H1 (cell line): ENCODE measurements at regions of chr1 and their contacts with region 1.

Region 1: DNA sequence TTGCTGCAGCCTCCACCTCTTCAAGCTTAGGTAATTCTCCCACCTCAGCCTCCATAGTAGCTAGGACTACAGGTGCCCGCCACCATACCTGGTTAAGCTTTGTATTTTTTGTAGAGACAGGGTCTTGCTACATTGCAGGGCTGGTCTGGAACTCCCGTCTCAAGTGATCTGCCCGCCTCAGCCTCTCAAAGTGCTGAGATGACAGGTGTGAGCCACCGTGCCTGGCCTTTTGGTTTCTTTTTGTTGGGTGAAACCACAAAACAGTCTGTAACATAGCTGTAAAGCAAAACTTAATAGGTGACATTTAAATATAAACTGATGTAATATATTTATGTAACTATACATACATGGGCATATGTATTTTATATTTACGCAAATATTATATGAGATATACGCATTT is 3.1 kb upstream of the DNAJC11 start:
- DNase-seq: no peak
- H3K4me3 ChIP-seq: no peak overlapping the region
- H3K27ac ChIP-seq: no peak overlapping the region
- H3K4me1 ChIP-seq: peaks cover 0 to 4% (median 2%) of the 10 kb centered on the region in 4 experiments; a peak in 3 of 7 replicates
- H3K27me3 ChIP-seq: peaks cover 0 to 4% (median 1%) of the 10 kb centered on the region in 4 experiments; a peak in 3 of 7 replicates
- CTCF ChIP-seq: no peak
- EP300 ChIP-seq: no peak
- POLR2A ChIP-seq: no peak
- RAD21 ChIP-seq: no peak

Region 2: DNA sequence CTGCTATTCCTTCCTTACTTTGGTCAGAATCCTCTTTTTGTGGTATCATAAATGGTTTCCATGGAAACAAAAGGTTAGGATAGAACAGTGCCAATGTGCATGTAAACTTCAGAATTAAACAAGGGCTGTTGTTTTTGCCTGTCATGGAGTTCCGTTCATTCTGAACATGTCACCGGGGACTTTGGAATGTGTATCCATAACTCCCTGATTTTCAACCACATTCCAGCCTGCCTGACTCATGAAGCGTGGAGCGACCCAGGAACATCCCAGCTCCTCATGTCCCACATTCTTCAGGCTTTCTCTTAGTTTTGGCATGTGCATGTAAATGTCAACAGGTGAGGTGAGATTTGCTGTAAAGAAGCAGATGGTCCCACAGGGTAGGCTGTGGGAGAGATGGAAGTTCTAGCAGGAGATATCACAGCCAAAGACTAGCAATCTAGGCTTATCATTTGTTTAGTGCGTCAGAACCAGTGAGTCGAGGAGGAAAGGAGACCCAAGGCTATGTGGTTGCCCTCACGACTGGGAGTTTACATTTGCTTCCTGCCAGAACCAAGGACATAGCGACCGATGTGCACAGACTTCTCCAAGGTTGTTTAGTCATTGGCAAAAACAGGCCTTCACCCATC is 19.9 kb after region 1 on chr1:
- CTCF ChIA-PET with region 1: interaction called, 21 read pairs
- POLR2A ChIA-PET with region 1: no interaction called
- DNase-seq: no peak
- H3K4me3 ChIP-seq: no peak overlapping the region
- H3K27ac ChIP-seq: no peak overlapping the region
- H3K4me1 ChIP-seq: no peaks in the 10 kb centered on the region
- H3K27me3 ChIP-seq: 0 out of 7 replicates have a peak, but pooled peaks cover 0 to 2% (median 0%) of the 10 kb centered on the region in 4 experiments
- CTCF ChIP-seq: no peak
- EP300 ChIP-seq: no peak
- POLR2A ChIP-seq: no peak
- RAD21 ChIP-seq: no peak

Region 3: DNA sequence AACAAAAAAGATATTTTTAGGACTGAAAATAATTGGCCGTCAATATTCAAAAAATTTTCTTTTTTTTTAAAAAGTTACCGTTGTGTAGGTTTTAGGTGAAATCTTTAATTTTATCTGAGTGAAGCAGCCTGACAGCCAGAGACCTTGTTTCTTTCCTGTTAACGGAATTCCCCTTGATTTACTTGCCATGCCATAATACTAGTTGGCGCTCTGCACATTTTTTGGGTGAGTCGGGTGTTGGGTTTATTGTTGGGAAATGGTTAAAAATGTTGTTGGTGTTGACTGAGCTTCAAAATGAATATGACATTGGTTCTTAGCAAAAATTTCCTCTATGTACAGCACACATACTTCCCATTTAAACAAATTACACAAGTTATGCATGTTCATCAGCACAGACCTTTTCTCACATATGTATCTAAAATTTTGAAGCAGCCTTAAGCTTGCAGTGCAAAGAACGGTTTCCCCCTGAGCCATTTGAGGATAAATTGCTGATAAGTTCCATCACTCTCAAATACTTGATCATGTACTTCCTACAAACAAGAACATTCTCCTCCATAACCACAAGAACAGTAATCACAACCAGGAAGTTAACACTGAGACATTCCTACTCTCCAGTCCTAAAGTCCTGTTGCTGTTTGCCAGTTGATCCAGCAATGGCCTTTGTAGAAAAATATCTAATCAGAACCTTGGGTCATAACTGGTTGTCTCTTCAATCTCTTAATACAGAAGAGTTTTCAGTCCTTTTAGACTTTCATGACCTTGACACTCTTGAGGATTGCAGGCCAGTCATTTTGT is 114.7 kb after region 1 on chr1:
- CTCF ChIA-PET with region 1: no interaction called
- POLR2A ChIA-PET with region 1: no interaction called
- DNase-seq: no peak
- H3K4me3 ChIP-seq: no peak overlapping the region
- H3K27ac ChIP-seq: no peak overlapping the region
- H3K4me1 ChIP-seq: peaks cover 0 to 2% (median 0%) of the 10 kb centered on the region in 4 experiments; a peak in 3 of 7 replicates
- H3K27me3 ChIP-seq: no peaks in the 10 kb centered on the region
- CTCF ChIP-seq: no peak
- EP300 ChIP-seq: no peak
- POLR2A ChIP-seq: no peak
- RAD21 ChIP-seq: no peak